Colonic mucosa (tissue), 4 donors: ENCODE measurements at regions of chr11 and their contacts with region 1.

Region 1: DNA sequence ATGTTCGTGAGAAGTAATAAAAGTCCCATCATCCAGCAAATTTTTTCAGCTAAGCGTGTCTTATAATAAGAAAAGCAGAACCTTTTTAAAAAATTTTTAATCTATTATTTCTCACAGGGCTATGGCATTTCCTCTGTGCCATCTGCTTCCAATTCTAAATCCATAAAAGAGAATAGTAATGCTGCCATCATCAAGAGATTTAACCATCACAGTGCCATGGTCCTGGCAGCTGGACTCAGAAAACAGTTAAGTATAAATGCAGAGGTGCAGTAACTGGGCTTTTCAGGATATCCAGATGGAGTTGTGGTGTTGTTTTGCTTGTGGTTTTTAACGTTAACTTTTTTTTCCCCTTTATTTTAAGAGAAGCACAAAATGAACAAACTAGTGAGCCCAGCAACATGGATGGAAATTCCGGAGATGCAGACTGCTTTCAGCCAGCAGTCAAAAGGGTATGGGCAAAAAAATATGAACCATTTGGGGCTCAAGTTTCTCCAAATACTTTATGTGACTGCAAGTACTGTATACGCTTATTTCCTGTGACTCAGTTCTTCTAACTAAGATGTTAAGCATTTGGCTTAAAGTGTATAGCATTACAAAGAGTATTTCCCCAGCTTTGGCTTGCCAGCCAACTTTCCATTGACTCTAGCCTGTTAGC is 25.2 kb downstream of the GTF2H1 start:
- DNase-seq: no peak
- H3K4me3 ChIP-seq: no peak overlapping the region
- H3K27ac ChIP-seq: no peak overlapping the region
- H3K4me1 ChIP-seq: no peaks in the 10 kb centered on the region
- H3K27me3 ChIP-seq: no peaks in the 10 kb centered on the region
- CTCF ChIP-seq: no peak

Region 2: GRCh38 chr11:18265949-18266348 is 81.6 kb before region 1 on chr11 and contains the start of gene SAA1:
- intact Hi-C with region 1: no loop called
- DNase-seq: no peak
- H3K4me3 ChIP-seq: no peak within 1 kb of the TSS
- H3K27ac ChIP-seq: no peak within 1 kb of the TSS
- H3K4me1 ChIP-seq: no peaks in the 10 kb centered on the region
- H3K27me3 ChIP-seq: no peaks in the 10 kb centered on the region
- CTCF ChIP-seq: no peak
- total RNA-seq, gene SAA1: 3.7 to 16.8 TPM

Region 3: GRCh38 chr11:18383388-18384156 is 36.0 kb after region 1 on chr11:
- intact Hi-C with region 1: no loop called
- DNase-seq: peak; percentile 90
- H3K4me3 ChIP-seq: no peak overlapping the region
- H3K27ac ChIP-seq: peak overlapping the region; percentile 98
- H3K4me1 ChIP-seq: peaks cover 14% of the 10 kb centered on the region
- H3K27me3 ChIP-seq: no peaks in the 10 kb centered on the region
- CTCF ChIP-seq: no peak

Region 4: GRCh38 chr11:18419040-18419439 is 71.4 kb after region 1 on chr11:
- intact Hi-C with region 1: loop called (anchors 10 kb)
- DNase-seq: no peak
- H3K4me3 ChIP-seq: no peak overlapping the region
- H3K27ac ChIP-seq: no peak overlapping the region
- H3K4me1 ChIP-seq: no peaks in the 10 kb centered on the region
- H3K27me3 ChIP-seq: no peaks in the 10 kb centered on the region
- CTCF ChIP-seq: no peak